ENCODE measurements at regions of chr10 and their contacts with region 1.

Region 1: GRCh38 chr10:110774069-110775019 is 97.4 kb upstream of the PDCD4 start:
- DNase-seq: no peak
- ATAC-seq: peak; percentile 82 to 86 (median 86)
- H3K4me3 ChIP-seq: no peak overlapping the region
- H3K27ac ChIP-seq: peak overlapping the region; percentile 81
- H3K4me1 ChIP-seq: peaks cover 46% of the 10 kb centered on the region
- H3K27me3 ChIP-seq: no peaks in the 10 kb centered on the region
- CTCF ChIP-seq: no peak

Region 2: DNA sequence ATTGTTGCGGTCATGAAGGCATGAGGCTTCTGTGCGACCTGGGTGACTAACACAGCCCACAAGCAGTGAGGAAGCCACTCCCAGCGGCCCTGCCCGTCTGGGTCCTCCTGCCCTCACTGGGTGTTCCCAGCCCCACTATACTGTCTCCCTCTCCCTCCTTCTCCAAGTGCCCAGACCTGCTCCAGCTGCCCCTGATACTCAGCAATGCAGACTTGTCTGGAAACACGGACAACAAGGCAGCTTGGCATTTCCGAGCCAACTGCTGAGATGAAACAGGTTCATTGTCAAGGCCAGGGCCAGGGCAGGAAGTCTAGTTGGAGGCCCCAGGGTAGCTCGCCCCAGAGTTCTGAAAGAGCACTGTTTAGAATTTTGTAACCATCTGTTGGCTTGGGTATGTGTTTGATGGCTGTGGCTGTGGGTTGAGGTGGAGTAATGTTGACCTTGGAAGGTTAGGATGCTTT is 34.5 kb before region 1 on chr10:
- intact Hi-C with region 1: loop called in 1 of 2 experiments (anchors 5 kb)
- DNase-seq: no peak
- ATAC-seq: peak in 2 of 4 donors; percentile 23 to 38
- H3K4me3 ChIP-seq: no peak overlapping the region
- H3K27ac ChIP-seq: no peak overlapping the region
- H3K4me1 ChIP-seq: peaks cover 21% of the 10 kb centered on the region
- H3K27me3 ChIP-seq: no peaks in the 10 kb centered on the region
- CTCF ChIP-seq: no peak

Region 3: GRCh38 chr10:110820321-110820814 is 46.0 kb after region 1 on chr10:
- intact Hi-C with region 1: loop called in 1 of 2 experiments (anchors 5 kb)
- DNase-seq: peak; percentile 40 to 81
- ATAC-seq: peak; percentile 79 to 85 (median 82)
- H3K4me3 ChIP-seq: no peak overlapping the region
- H3K27ac ChIP-seq: peak overlapping the region; percentile 82
- H3K4me1 ChIP-seq: peaks cover 71% of the 10 kb centered on the region
- H3K27me3 ChIP-seq: no peaks in the 10 kb centered on the region
- CTCF ChIP-seq: no peak